ENCODE measurements at regions of chr3 and their contacts with region 1.

Region 1: GRCh38 chr3:113754494-113755159 is 7.8 kb downstream of the ATP6V1A start:
- DNase-seq: no peak
- H3K4me3 ChIP-seq: no peak overlapping the region
- H3K27ac ChIP-seq: peak overlapping the region in 2 of 4 donors; percentile 8 to 38
- H3K4me1 ChIP-seq: peaks cover 0 to 22% (median 12%) of the 10 kb centered on the region in 4 donors
- H3K27me3 ChIP-seq: no peaks in the 10 kb centered on the region
- CTCF ChIP-seq: no peak
- EP300 ChIP-seq: no peak
- POLR2A ChIP-seq: no peak

Region 2: DNA sequence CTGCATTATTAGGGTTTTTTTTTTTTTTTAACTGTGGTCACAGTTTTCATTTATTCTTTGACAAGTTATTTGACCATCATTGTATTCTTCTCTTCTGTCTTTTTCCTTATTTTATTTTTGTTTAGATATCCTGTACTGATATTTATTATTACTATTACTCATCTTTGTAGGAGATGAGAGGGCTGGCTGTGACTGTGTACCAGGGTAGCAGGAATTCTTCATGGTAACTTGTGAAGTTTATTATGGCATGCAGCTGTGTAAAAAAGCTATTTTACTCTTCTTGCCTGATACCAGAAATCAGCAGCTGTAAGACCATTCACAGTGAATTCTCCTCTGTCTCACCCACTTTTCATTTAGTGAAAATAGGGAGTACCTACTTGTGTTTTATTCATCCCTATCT is 36.8 kb after region 1 on chr3:
- intact Hi-C with region 1: no loop called
- DNase-seq: no peak
- H3K4me3 ChIP-seq: no peak overlapping the region
- H3K27ac ChIP-seq: no peak overlapping the region
- H3K4me1 ChIP-seq: no peaks in the 10 kb centered on the region
- H3K27me3 ChIP-seq: no peaks in the 10 kb centered on the region
- CTCF ChIP-seq: no peak
- EP300 ChIP-seq: no peak
- POLR2A ChIP-seq: no peak

Region 3: DNA sequence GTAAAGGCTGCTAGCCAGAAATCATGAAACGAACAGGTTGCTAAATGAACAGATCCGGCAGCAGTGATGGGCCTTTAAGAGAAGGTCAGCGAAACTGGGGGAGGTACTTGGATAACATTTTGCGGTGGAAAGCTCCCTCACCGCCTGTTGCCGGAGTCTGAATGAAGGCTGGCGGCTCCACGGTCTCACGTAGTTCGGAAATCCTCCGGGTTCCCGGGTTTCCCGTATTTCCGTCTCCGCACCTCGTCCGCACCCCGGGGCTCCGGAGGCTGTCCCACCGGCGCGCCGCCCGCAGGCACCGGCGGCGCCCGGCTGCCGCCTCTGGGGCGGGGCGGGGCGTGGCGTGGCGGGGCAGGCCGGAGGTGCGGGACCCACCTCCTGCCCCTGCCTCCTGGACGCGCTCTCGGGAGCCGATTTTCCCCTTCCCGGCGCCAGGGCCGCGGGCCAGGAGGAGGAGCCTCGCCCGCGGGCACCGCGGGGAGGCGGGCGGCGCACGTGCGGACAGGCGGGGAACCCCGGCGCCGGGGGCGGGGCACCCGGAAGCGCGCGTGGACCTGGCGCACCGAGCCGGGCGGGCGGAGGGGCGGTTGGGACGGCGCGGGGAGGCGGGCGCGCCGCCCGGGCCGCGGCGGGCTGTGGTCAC is 192.9 kb after region 1 on chr3 and contains the start of gene ZDHHC23:
- intact Hi-C with region 1: loop called (anchors 10 kb)
- DNase-seq: peak; percentile 84
- H3K4me3 ChIP-seq: peak within 1 kb of the TSS; percentile 58 to 82 (median 68)
- H3K27ac ChIP-seq: peak within 1 kb of the TSS; percentile 40 to 63 (median 61)
- H3K4me1 ChIP-seq: peaks cover 0 to 11% (median 9%) of the 10 kb centered on the region in 4 donors
- H3K27me3 ChIP-seq: no peaks in the 10 kb centered on the region
- CTCF ChIP-seq: no peak
- EP300 ChIP-seq: no peak
- POLR2A ChIP-seq: no peak
- total RNA-seq, gene ZDHHC23: 1.1 to 1.4 (median 1.3) TPM

Measured in sigmoid colon (tissue), 7 donors.